CD8-positive, alpha-beta memory T cell (primary cell): ENCODE measurements at regions of chr7 and their contacts with region 1.

Region 1: DNA sequence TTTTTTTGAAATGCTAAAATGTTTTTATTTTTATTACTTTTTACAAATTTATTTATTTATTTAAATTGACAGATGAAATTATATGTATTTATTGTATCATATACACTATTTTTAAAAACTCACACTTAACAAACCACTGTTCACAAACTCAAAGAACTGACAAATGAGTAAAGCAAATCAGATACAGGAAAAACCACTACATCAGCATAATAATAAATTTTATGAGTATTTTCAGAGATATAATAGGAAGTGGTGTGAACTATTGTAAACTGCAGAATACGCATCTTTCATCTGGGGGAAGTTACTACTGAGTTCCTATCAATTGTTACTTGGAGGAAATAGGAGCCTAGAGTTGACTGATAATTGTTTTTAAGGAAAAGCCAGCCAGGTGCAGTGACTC is 150.7 kb downstream of the PCLO start:
- DNase-seq: no peak
- H3K4me3 ChIP-seq: no peak overlapping the region
- H3K4me3 Mint-ChIP-seq: no peak overlapping the region
- H3K27ac ChIP-seq: no peak overlapping the region
- H3K27ac Mint-ChIP-seq: no peak overlapping the region
- H3K4me1 ChIP-seq: no peaks in the 10 kb centered on the region
- H3K4me1 Mint-ChIP-seq: no peaks in the 10 kb centered on the region
- H3K27me3 ChIP-seq: no peaks in the 10 kb centered on the region
- H3K27me3 Mint-ChIP-seq: no peaks in the 10 kb centered on the region

Region 2: GRCh38 chr7:82950436-82950835 is 61.5 kb before region 1 on chr7:
- CTCF ChIA-PET with region 1: no interaction called
- POLR2A ChIA-PET with region 1: no interaction called
- DNase-seq: no peak
- H3K4me3 ChIP-seq: no peak overlapping the region
- H3K4me3 Mint-ChIP-seq: no peak overlapping the region
- H3K27ac ChIP-seq: no peak overlapping the region
- H3K27ac Mint-ChIP-seq: no peak overlapping the region
- H3K4me1 ChIP-seq: no peaks in the 10 kb centered on the region
- H3K4me1 Mint-ChIP-seq: no peaks in the 10 kb centered on the region
- H3K27me3 ChIP-seq: no peaks in the 10 kb centered on the region
- H3K27me3 Mint-ChIP-seq: no peaks in the 10 kb centered on the region

Region 3: DNA sequence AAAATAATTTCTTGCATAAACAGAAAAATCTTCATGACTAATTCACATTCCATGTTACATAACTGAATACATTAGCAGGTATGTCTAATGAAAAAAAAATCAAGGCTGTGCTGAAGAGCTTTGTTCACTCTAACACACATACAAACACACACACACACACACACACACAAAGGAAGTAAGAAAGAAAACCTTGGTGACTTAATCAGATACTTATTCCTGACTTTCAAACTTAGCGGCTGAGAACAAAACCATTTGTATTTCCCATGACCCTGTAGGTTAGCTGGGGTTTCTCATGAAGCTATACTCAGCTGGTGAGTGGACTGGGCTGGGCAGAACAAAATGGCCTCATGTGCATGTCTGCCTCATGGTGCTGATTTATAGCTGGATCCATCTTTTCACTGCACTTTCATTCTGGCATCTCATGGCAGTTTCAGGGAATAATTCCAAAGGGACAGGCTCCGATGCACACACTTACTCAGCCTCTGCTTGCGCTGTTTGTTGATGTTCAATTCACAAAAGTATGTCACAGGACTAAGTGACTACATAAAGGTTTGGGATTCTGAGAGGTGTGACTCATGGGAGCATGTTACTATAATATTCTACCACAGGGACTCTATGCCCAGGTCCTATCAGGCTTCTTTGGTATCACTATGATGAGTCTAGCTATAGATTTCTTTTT is 10.5 kb before region 1 on chr7:
- CTCF ChIA-PET with region 1: no interaction called
- POLR2A ChIA-PET with region 1: interaction called, 12 read pairs
- DNase-seq: no peak
- H3K4me3 ChIP-seq: no peak overlapping the region
- H3K4me3 Mint-ChIP-seq: no peak overlapping the region
- H3K27ac ChIP-seq: no peak overlapping the region
- H3K27ac Mint-ChIP-seq: no peak overlapping the region
- H3K4me1 ChIP-seq: no peaks in the 10 kb centered on the region
- H3K4me1 Mint-ChIP-seq: no peaks in the 10 kb centered on the region
- H3K27me3 ChIP-seq: no peaks in the 10 kb centered on the region
- H3K27me3 Mint-ChIP-seq: no peaks in the 10 kb centered on the region